ENCODE measurements at regions of chr19 and their contacts with region 1.

Region 1: DNA sequence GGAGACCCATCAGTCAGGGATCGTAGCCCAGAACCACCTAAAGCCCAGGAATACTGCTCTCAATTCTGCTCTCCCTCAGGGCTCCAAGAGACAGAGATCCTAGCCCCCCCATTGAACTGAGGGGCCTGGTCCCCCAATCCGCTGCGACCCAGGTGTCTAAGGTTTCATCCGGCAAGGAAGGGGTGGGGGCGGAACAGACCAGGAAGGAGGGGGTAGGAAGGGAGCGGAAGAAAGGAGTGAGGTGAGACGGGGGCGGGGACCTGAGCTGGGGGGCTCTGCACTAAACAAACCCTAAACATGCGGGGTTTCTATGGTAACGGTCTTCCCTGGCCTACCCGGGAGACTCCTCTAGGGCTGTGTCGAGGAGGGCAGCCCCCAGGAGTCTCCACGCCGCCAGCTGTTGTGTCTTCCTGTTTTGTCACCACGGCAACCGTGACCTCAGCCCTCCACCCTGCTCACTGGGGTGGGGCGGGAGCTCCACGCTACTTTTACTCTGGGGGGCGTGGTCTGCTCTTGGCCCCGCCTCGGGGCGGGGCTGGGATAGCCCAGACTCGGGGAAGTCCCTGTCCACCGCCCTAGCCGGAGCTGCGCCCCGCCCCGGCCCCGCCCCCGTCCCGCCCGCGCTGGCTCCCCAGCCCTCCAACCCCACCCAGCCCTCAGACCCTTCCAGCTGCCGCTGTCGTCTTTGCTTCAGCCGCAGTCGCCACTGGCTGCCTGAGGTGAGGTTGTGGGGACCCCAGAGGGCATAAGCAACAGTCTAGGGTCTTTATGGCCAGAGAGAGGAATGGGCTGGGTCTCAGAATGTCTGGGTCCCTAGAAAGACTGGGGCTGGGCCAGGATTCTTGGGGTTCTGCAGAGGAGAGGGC is at the start of gene MYADM:
- DNase-seq: peak; percentile 99 to 100 (median 100)
- ATAC-seq: peak; percentile 72
- H3K4me3 ChIP-seq: peak within 1 kb of the TSS; percentile 96 to 97
- H3K4me3 Mint-ChIP-seq: peak within 1 kb of the TSS; percentile 98
- H3K27ac ChIP-seq: peak within 1 kb of the TSS; percentile 98 to 99
- H3K27ac Mint-ChIP-seq: peak within 1 kb of the TSS; percentile 96
- H3K4me1 ChIP-seq: peaks cover 32% of the 10 kb centered on the region
- H3K4me1 Mint-ChIP-seq: peaks cover 39% of the 10 kb centered on the region
- H3K27me3 ChIP-seq: no peaks in the 10 kb centered on the region
- H3K27me3 Mint-ChIP-seq: no peaks in the 10 kb centered on the region
- CTCF ChIP-seq: no peak
- total RNA-seq, gene MYADM: 241 to 251 TPM

Region 2: GRCh38 chr19:52942386-52943133 is 924.9 kb before region 1 on chr19:
- CTCF ChIA-PET with region 1: no interaction called
- POLR2A ChIA-PET with region 1: no interaction called
- intact Hi-C with region 1: loop called in 1 of 2 experiments (anchors 5 kb)
- DNase-seq: peak; percentile 91 to 97 (median 95)
- ATAC-seq: peak; percentile 99
- H3K4me3 ChIP-seq: peak overlapping the region; percentile 88 to 91
- H3K4me3 Mint-ChIP-seq: peak overlapping the region; percentile 95
- H3K27ac ChIP-seq: peak overlapping the region; percentile 66 to 86
- H3K27ac Mint-ChIP-seq: peak overlapping the region; percentile 93
- H3K4me1 ChIP-seq: peaks cover 7% of the 10 kb centered on the region
- H3K4me1 Mint-ChIP-seq: peaks cover 28% of the 10 kb centered on the region
- H3K27me3 ChIP-seq: no peaks in the 10 kb centered on the region
- H3K27me3 Mint-ChIP-seq: no peaks in the 10 kb centered on the region
- CTCF ChIP-seq: no peak

Region 3: GRCh38 chr19:53333463-53334449 is 533.7 kb before region 1 on chr19 and contains the start of gene ZNF845:
- CTCF ChIA-PET with region 1: no interaction called
- POLR2A ChIA-PET with region 1: no interaction called
- intact Hi-C with region 1: loop called in 1 of 2 experiments (anchors 5 kb)
- DNase-seq: peak; percentile 93 to 98 (median 96)
- ATAC-seq: peak; percentile 98
- H3K4me3 ChIP-seq: peak within 1 kb of the TSS; percentile 81 to 98
- H3K4me3 Mint-ChIP-seq: peak within 1 kb of the TSS; percentile 92
- H3K27ac ChIP-seq: peak within 1 kb of the TSS; percentile 66 to 83
- H3K27ac Mint-ChIP-seq: peak within 1 kb of the TSS; percentile 81
- H3K4me1 ChIP-seq: no peaks in the 10 kb centered on the region
- H3K4me1 Mint-ChIP-seq: peaks cover 31% of the 10 kb centered on the region
- H3K27me3 ChIP-seq: peaks cover 0 to 4% of the 10 kb centered on the region in 2 experiments
- H3K27me3 Mint-ChIP-seq: peaks cover 3% of the 10 kb centered on the region
- CTCF ChIP-seq: no peak
- total RNA-seq, gene ZNF845: 10.9 to 11.7 TPM

Region 4: DNA sequence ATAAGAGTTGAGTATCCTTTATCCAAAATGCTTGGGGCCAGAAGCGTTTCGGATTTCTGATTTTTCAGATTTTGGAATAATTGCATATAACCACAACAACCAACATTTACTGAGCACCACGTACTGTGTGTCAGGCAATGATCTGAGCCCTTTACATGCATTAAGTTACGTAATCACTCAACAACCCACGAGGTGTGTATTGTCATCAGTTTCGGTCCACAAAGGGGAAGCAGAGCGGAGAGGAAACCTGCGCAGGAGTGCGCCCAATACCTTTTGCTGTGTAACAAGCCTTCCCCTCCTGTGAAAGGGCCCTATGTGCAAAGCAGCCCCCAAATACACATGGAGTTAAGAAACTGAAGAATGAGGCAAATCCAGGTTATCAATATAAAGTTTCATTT is 22.6 kb before region 1 on chr19:
- CTCF ChIA-PET with region 1: no interaction called
- POLR2A ChIA-PET with region 1: no interaction called
- intact Hi-C with region 1: loop called in 1 of 2 experiments (anchors 1 kb)
- DNase-seq: peak in 1 of 9 experiments; percentile 32
- ATAC-seq: no peak
- H3K4me3 ChIP-seq: no peak overlapping the region
- H3K4me3 Mint-ChIP-seq: no peak overlapping the region
- H3K27ac ChIP-seq: no peak overlapping the region
- H3K27ac Mint-ChIP-seq: no peak overlapping the region
- H3K4me1 ChIP-seq: no peaks in the 10 kb centered on the region
- H3K4me1 Mint-ChIP-seq: peaks cover 5% of the 10 kb centered on the region
- H3K27me3 ChIP-seq: peaks cover 0 to under 1% of the 10 kb centered on the region in 2 experiments
- H3K27me3 Mint-ChIP-seq: peaks cover 21% of the 10 kb centered on the region
- CTCF ChIP-seq: no peak

Region 5: GRCh38 chr19:54115109-54116063 is 247.9 kb after region 1 on chr19 and contains the starts of genes PRPF31 and TFPT:
- CTCF ChIA-PET with region 1: no interaction called
- POLR2A ChIA-PET with region 1: no interaction called
- intact Hi-C with region 1: loop called in 1 of 2 experiments (anchors 1 kb)
- DNase-seq: peak; percentile 90 to 99 (median 97)
- ATAC-seq: peak; percentile 87
- H3K4me3 ChIP-seq: peak within 1 kb of the TSS; percentile 77 to 81
- H3K4me3 Mint-ChIP-seq: peak within 1 kb of the TSS; percentile 91
- H3K27ac ChIP-seq: peak within 1 kb of the TSS; percentile 64 to 89
- H3K27ac Mint-ChIP-seq: peak within 1 kb of the TSS; percentile 90
- H3K4me1 ChIP-seq: peaks cover 22% of the 10 kb centered on the region
- H3K4me1 Mint-ChIP-seq: peaks cover 40% of the 10 kb centered on the region
- H3K27me3 ChIP-seq: no peaks in the 10 kb centered on the region
- H3K27me3 Mint-ChIP-seq: no peaks in the 10 kb centered on the region
- CTCF ChIP-seq: no peak
- total RNA-seq, gene PRPF31: 60.0 to 66.8 TPM
- total RNA-seq, gene TFPT: 7.8 to 8.2 TPM

Region 6: DNA sequence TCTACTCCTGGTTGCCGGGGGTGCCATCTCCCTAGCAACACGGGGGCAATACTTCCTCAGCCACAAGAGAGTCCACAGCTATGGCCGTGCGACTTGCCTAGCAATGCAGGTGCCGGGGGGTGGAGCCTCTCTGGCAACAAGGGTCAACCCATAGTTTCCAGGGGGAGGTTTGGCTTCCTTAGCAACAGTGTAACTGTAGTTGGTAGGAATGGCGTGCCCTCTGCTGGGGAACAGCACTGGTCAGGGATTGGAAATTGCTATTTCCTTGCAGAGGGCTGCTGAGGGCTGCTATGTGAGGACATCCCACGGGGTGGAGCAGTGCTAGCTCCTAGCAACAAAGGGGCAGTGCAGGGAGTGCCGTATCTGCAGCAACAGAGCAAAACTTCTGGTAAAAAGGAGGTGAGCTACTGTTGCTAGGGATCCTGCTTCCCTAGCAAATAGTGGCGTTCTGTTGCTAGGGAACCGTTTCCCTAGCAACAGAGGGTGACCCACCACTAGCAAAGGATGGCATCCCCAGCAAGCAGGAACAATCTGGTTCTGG is 312.5 kb after region 1 on chr19:
- CTCF ChIA-PET with region 1: no interaction called
- POLR2A ChIA-PET with region 1: no interaction called
- intact Hi-C with region 1: no loop called
- DNase-seq: no peak
- ATAC-seq: no peak
- H3K4me3 ChIP-seq: no peak overlapping the region
- H3K4me3 Mint-ChIP-seq: no peak overlapping the region
- H3K27ac ChIP-seq: no peak overlapping the region
- H3K27ac Mint-ChIP-seq: no peak overlapping the region
- H3K4me1 ChIP-seq: no peaks in the 10 kb centered on the region
- H3K4me1 Mint-ChIP-seq: no peaks in the 10 kb centered on the region
- H3K27me3 ChIP-seq: no peaks in the 10 kb centered on the region
- H3K27me3 Mint-ChIP-seq: no peaks in the 10 kb centered on the region
- CTCF ChIP-seq: no peak

Region 7: GRCh38 chr19:54373781-54374631 is 506.5 kb after region 1 on chr19:
- CTCF ChIA-PET with region 1: no interaction called
- POLR2A ChIA-PET with region 1: no interaction called
- intact Hi-C with region 1: loop called (anchors 5 to 10 kb)
- DNase-seq: peak in 1 of 9 experiments; percentile 37
- ATAC-seq: no peak
- H3K4me3 ChIP-seq: no peak overlapping the region
- H3K4me3 Mint-ChIP-seq: no peak overlapping the region
- H3K27ac ChIP-seq: no peak overlapping the region
- H3K27ac Mint-ChIP-seq: no peak overlapping the region
- H3K4me1 ChIP-seq: peaks cover 82% of the 10 kb centered on the region
- H3K4me1 Mint-ChIP-seq: peaks cover 77% of the 10 kb centered on the region
- H3K27me3 ChIP-seq: no peaks in the 10 kb centered on the region
- H3K27me3 Mint-ChIP-seq: no peaks in the 10 kb centered on the region
- CTCF ChIP-seq: no peak

Region 8: GRCh38 chr19:55178781-55179599 is 1311.5 kb after region 1 on chr19:
- CTCF ChIA-PET with region 1: no interaction called
- POLR2A ChIA-PET with region 1: no interaction called
- intact Hi-C with region 1: loop called in 1 of 2 experiments (anchors 10 kb)
- DNase-seq: peak; percentile 87 to 99 (median 96)
- ATAC-seq: peak; percentile 79
- H3K4me3 ChIP-seq: peak overlapping the region; percentile 39 to 44
- H3K4me3 Mint-ChIP-seq: peak overlapping the region; percentile 75
- H3K27ac ChIP-seq: peak overlapping the region; percentile 45 to 61
- H3K27ac Mint-ChIP-seq: peak overlapping the region; percentile 79
- H3K4me1 ChIP-seq: peaks cover 27% of the 10 kb centered on the region
- H3K4me1 Mint-ChIP-seq: peaks cover 23% of the 10 kb centered on the region
- H3K27me3 ChIP-seq: peaks cover 43 to 67% of the 10 kb centered on the region in 2 experiments
- H3K27me3 Mint-ChIP-seq: peaks cover 68% of the 10 kb centered on the region
- CTCF ChIP-seq: no peak